Gastrocnemius medialis (tissue), 4 donors: ENCODE measurements at regions of chr6 and their contacts with region 1.

Region 1: GRCh38 chr6:32700391-32701040 is 34.1 kb upstream of the HLA-DQB1 start:
- DNase-seq: peak in 1 of 2 donors; percentile 13
- ATAC-seq: peak; percentile 33 to 50
- H3K4me3 ChIP-seq: no peak overlapping the region
- H3K27ac ChIP-seq: no peak overlapping the region
- H3K4me1 ChIP-seq: no peaks in the 10 kb centered on the region
- H3K27me3 ChIP-seq: peaks cover 0 to 4% (median 3%) of the 10 kb centered on the region in 3 donors
- CTCF ChIP-seq: peak in 4 of 5 experiments; percentile 22 to 58 (median 40)
- POLR2A ChIP-seq: no peak

Region 2: GRCh38 chr6:32413427-32414047 is 287.0 kb before region 1 on chr6:
- in situ Hi-C with region 1: loop called in 1 of 4 experiments (anchors 10 kb)
- intact Hi-C with region 1: loop called (anchors 2 kb)
- DNase-seq: peak; percentile 42 to 46
- ATAC-seq: peak; percentile 45 to 71
- H3K4me3 ChIP-seq: no peak overlapping the region
- H3K27ac ChIP-seq: no peak overlapping the region
- H3K4me1 ChIP-seq: peaks cover 0 to 3% of the 10 kb centered on the region in 2 donors
- H3K27me3 ChIP-seq: peaks cover 0 to 11% (median 6%) of the 10 kb centered on the region in 3 donors
- CTCF ChIP-seq: peak; percentile 64 to 94 (median 85)
- POLR2A ChIP-seq: no peak

Region 3: GRCh38 chr6:32424589-32425300 is 275.8 kb before region 1 on chr6:
- in situ Hi-C with region 1: loop called (anchors 5 to 10 kb)
- intact Hi-C with region 1: no loop called
- DNase-seq: no peak
- ATAC-seq: no peak
- H3K4me3 ChIP-seq: no peak overlapping the region
- H3K27ac ChIP-seq: no peak overlapping the region
- H3K4me1 ChIP-seq: no peaks in the 10 kb centered on the region
- H3K27me3 ChIP-seq: peaks cover 2 to 9% (median 4%) of the 10 kb centered on the region in 3 donors
- CTCF ChIP-seq: no peak
- POLR2A ChIP-seq: no peak

Region 4: DNA sequence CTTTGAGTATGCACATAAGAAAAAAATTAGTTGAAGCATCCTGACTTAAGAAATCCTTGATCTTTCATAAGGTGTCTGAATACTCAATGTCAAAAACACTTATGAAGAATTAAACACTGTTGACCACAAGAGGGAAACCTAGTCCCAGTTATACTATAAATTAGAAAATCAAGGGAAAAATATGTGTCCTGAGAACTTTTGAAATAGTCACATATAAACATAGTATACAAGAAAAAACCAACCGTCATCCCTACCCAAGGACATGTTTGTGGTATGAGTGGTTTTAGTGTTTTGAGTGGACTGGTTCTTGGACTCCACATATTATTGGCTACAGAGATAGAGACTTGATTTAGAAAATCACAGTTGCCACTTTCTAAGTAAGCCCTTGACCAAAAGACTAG is 268.5 kb before region 1 on chr6:
- in situ Hi-C with region 1: loop called in 3 of 4 experiments (anchors 5 to 10 kb)
- intact Hi-C with region 1: loop called (anchors 5 kb)
- DNase-seq: no peak
- ATAC-seq: no peak
- H3K4me3 ChIP-seq: no peak overlapping the region
- H3K27ac ChIP-seq: no peak overlapping the region
- H3K4me1 ChIP-seq: no peaks in the 10 kb centered on the region
- H3K27me3 ChIP-seq: no peaks in the 10 kb centered on the region
- CTCF ChIP-seq: peak in 3 of 5 experiments; percentile 16 to 37 (median 24)
- POLR2A ChIP-seq: no peak

Region 5: DNA sequence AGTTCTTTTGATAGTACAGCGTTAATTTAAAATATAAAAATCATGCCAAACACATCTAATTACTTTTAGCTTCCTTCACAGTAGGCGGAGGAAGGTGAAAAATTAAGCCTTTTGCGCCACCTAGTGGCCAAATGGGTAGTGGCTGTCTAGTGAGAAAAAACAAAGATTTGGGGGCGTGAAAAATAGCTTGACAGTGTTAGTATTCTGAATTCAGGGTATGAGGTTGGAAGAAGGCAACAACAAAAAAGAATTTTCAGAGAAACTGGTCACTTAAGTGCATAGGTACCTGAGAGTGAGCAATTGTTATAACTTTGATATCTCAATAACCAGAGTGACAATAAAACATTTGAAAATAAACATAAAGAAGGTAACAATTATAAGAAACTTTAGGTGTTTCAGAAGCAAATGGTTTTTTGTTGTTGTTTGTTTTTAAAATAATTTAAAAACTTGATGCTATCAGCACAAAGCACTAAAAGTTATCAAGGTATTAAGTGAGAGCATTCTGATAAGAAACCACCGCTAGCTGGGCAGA is 167.8 kb after region 1 on chr6:
- in situ Hi-C with region 1: no loop called
- intact Hi-C with region 1: no loop called
- DNase-seq: peak; percentile 46 to 55
- ATAC-seq: peak; percentile 60 to 86
- H3K4me3 ChIP-seq: no peak overlapping the region
- H3K27ac ChIP-seq: no peak overlapping the region
- H3K4me1 ChIP-seq: no peaks in the 10 kb centered on the region
- H3K27me3 ChIP-seq: no peaks in the 10 kb centered on the region
- CTCF ChIP-seq: peak; percentile 88 to 95 (median 91)
- POLR2A ChIP-seq: no peak